ENCODE measurements at regions of chr1 and their contacts with region 1.

Region 1: DNA sequence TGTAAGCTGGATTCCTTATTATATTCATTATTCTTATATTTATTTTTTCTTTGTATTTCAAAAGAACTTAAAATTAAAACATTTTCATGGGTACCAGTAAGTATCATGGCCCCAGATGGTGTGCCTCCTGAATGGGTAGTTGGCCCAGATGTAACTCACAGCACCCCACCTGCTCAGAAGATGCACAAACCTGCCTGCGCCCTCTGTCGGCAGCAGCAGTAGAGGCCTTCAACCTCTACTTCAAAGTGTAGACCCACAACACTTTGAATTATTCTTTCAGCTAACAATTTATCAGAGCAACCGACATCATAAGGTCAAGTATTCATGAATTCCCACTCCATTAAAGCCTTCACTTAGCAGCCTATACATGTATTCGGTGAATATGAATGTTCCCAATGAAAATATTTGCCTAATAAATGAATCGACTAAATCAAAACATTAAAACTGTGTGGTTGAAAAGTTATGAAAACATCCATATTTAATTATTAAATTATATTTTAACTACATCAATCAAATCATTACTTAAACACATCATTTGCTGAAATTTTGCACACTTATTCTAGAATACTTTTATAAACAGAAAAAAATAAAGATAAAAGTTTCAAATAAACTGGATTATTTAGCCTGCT is 25.4 kb downstream of the PIGM start:
- DNase-seq: peak; percentile 79
- H3K4me3 Mint-ChIP-seq: no peak overlapping the region
- H3K27ac Mint-ChIP-seq: no peak overlapping the region
- H3K4me1 Mint-ChIP-seq: no peaks in the 10 kb centered on the region
- H3K27me3 Mint-ChIP-seq: peaks cover 9% of the 10 kb centered on the region

Region 2: GRCh38 chr1:159854693-159855192 is 151.7 kb before region 1 on chr1:
- CTCF ChIA-PET with region 1: interaction called, 10 read pairs
- POLR2A ChIA-PET with region 1: no interaction called
- DNase-seq: peak; percentile 82
- H3K4me3 Mint-ChIP-seq: peak overlapping the region; percentile 78
- H3K27ac Mint-ChIP-seq: peak overlapping the region; percentile 27
- H3K4me1 Mint-ChIP-seq: peaks cover 10% of the 10 kb centered on the region
- H3K27me3 Mint-ChIP-seq: no peaks in the 10 kb centered on the region

Region 3: GRCh38 chr1:159936273-159936904 is 70.0 kb before region 1 on chr1:
- CTCF ChIA-PET with region 1: interaction called, 160 read pairs
- POLR2A ChIA-PET with region 1: interaction called, 6 read pairs
- DNase-seq: peak; percentile 86
- H3K4me3 Mint-ChIP-seq: no peak overlapping the region
- H3K27ac Mint-ChIP-seq: no peak overlapping the region
- H3K4me1 Mint-ChIP-seq: peaks cover 28% of the 10 kb centered on the region
- H3K27me3 Mint-ChIP-seq: peaks cover 23% of the 10 kb centered on the region

Region 4: GRCh38 chr1:159991513-159991912 is 14.9 kb before region 1 on chr1:
- CTCF ChIA-PET with region 1: interaction called, 38 read pairs
- POLR2A ChIA-PET with region 1: no interaction called
- DNase-seq: no peak
- H3K4me3 Mint-ChIP-seq: no peak overlapping the region
- H3K27ac Mint-ChIP-seq: no peak overlapping the region
- H3K4me1 Mint-ChIP-seq: peaks cover 7% of the 10 kb centered on the region
- H3K27me3 Mint-ChIP-seq: peaks cover 26% of the 10 kb centered on the region

Region 5: GRCh38 chr1:160046494-160047110 is 40.2 kb after region 1 on chr1:
- CTCF ChIA-PET with region 1: interaction called, 21 read pairs
- POLR2A ChIA-PET with region 1: no interaction called
- DNase-seq: peak; percentile 47
- H3K4me3 Mint-ChIP-seq: peak overlapping the region; percentile 44
- H3K27ac Mint-ChIP-seq: no peak overlapping the region
- H3K4me1 Mint-ChIP-seq: peaks cover 12% of the 10 kb centered on the region
- H3K27me3 Mint-ChIP-seq: peaks cover 39% of the 10 kb centered on the region

Region 6: DNA sequence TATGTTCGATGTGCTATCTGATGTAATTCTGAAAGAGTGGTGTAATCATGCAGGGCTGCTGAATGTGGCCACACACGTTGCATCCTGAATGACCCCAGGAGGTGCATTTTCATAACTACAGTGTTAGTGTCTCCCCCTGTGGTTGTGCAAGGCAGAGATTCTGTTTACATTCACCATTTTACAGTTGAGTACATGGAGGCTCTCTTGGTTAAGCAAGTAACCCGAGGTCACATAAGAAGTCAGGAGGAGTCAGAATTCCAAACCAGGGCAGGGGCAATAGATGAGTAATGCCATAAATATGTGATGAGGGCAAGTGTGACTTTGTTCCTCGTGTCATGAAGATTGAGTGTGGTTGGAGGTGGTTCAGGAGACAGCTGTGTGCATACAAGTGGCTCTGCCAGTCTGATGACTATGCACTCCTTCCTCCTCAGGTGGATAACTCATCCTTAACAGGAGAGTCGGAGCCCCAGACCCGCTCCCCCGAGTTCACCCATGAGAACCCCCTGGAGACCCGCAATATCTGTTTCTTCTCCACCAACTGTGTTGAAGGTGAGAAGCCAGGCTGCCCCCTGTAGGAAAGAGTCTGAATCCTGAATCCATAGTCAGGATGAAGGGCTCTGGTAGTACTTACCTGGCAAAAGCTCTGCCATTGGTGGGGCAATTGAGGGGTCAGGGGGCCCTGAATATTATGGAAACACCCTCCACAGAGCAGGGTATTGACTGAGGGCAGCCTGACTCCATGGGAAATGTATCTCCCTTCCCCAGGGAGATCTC is 118.5 kb after region 1 on chr1:
- CTCF ChIA-PET with region 1: no interaction called
- POLR2A ChIA-PET with region 1: no interaction called
- DNase-seq: no peak
- H3K4me3 Mint-ChIP-seq: no peak overlapping the region
- H3K27ac Mint-ChIP-seq: no peak overlapping the region
- H3K4me1 Mint-ChIP-seq: no peaks in the 10 kb centered on the region
- H3K27me3 Mint-ChIP-seq: peaks cover 4% of the 10 kb centered on the region

Region 7: DNA sequence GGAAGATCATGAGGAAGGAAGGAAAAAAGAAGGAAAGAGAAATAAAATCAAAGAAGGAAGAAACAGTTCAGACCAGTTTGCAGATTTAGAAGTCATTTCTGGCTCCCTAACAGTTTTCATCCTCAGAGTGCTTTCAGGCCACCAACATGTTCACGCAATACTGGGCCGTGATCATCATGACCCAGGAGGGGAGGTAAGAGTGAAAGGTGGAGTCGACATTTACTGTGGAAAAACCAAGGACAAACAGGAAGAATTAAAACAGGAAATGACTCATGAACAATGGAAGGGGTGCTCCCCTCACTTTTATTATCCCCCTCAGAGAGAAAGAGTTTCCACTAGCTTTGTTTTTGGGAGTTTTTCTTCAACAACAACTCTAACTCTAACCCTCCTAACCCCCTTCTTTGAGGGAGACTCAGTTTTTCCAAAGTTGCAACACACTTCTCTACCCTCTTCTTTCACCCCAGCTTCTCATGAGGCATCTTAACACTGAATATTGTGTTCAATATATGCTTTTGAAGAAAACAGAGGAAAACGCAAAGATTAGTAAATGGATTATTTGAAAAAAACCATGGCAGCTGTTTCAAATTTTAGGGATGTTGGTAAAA is 454.4 kb after region 1 on chr1:
- CTCF ChIA-PET with region 1: no interaction called
- POLR2A ChIA-PET with region 1: no interaction called
- DNase-seq: no peak
- H3K4me3 Mint-ChIP-seq: peak overlapping the region; percentile 63
- H3K27ac Mint-ChIP-seq: peak overlapping the region; percentile 82
- H3K4me1 Mint-ChIP-seq: peaks cover 62% of the 10 kb centered on the region
- H3K27me3 Mint-ChIP-seq: no peaks in the 10 kb centered on the region